ENCODE measurements at regions of chr20 and their contacts with region 1.

Region 1: GRCh38 chr20:6629564-6629963 is 137.9 kb upstream of the BMP2 start:
- DNase-seq: no peak
- H3K4me3 ChIP-seq: no peak overlapping the region
- H3K27ac ChIP-seq: no peak overlapping the region
- H3K4me1 ChIP-seq: no peaks in the 10 kb centered on the region
- CTCF ChIP-seq: no peak

Region 2: GRCh38 chr20:6618051-6618450 is 11.5 kb before region 1 on chr20:
- CTCF ChIA-PET with region 1: no interaction called
- POLR2A ChIA-PET with region 1: interaction called, 10 read pairs
- intact Hi-C with region 1: no loop called
- DNase-seq: no peak
- H3K4me3 ChIP-seq: no peak overlapping the region
- H3K27ac ChIP-seq: no peak overlapping the region
- H3K4me1 ChIP-seq: no peaks in the 10 kb centered on the region
- CTCF ChIP-seq: no peak